ENCODE measurements at regions of chr2 and their contacts with region 1.

Region 1: GRCh38 chr2:3728104-3729054 is 25.0 kb downstream of the DCDC2C start:
- DNase-seq: peak in 1 of 9 experiments; percentile 10
- ATAC-seq: no peak
- H3K4me3 ChIP-seq: no peak overlapping the region
- H3K4me3 Mint-ChIP-seq: no peak overlapping the region
- H3K27ac ChIP-seq: no peak overlapping the region
- H3K27ac Mint-ChIP-seq: no peak overlapping the region
- H3K4me1 ChIP-seq: no peaks in the 10 kb centered on the region
- H3K4me1 Mint-ChIP-seq: no peaks in the 10 kb centered on the region
- H3K27me3 ChIP-seq: no peaks in the 10 kb centered on the region
- H3K27me3 Mint-ChIP-seq: peaks cover 6% of the 10 kb centered on the region
- CTCF ChIP-seq: peak; percentile 34

Region 2: DNA sequence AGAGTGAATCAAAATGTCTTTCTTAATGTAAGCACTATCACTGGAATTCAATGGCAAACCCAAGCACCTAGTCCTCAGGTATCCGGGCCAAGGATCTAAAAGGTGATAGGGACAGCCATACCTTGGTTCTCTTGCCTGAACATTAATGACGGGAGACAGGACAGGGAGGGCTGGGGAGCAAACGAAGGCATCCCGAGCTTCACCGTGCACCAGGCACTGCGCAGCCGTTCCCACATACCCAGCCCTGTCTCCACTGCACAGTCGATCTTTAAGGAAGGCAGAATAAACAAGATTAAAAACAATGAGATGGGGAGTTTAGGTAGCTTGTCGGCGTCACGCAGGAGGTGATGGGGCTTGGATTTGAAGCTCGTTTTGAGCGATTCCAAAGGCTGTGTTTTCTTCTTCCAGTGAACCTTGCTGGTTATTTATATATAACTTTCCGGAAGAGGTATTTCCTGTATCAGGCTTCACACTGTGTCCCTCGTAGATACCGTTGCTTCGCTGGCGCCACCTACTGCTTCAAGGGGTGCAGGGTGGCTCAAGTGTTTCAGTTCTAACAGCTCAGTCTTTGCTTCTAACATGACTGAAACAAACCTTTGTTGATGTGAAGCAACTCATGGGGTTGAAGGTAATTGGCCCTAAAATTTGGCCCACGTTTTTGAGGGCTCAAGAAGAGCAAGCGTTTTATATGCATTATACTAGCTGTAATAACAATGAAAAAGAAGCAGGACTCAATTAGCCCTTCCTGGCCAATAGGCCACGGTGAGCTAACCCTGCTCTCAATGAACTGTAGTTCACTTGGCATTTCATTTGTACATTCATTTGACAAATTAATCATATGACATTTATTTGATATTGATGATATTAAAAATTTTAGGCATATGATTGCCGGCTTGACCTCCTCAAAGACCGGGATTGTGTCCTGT is 52.4 kb after region 1 on chr2:
- CTCF ChIA-PET with region 1: interaction called, 6 read pairs
- POLR2A ChIA-PET with region 1: no interaction called
- intact Hi-C with region 1: loop called in 1 of 2 experiments (anchors 2 kb)
- DNase-seq: peak in 7 of 9 experiments; percentile 4 to 56 (median 36)
- ATAC-seq: no peak
- H3K4me3 ChIP-seq: no peak overlapping the region
- H3K4me3 Mint-ChIP-seq: peak overlapping the region; percentile 62
- H3K27ac ChIP-seq: no peak overlapping the region
- H3K27ac Mint-ChIP-seq: no peak overlapping the region
- H3K4me1 ChIP-seq: no peaks in the 10 kb centered on the region
- H3K4me1 Mint-ChIP-seq: peaks cover 8% of the 10 kb centered on the region
- H3K27me3 ChIP-seq: no peaks in the 10 kb centered on the region
- H3K27me3 Mint-ChIP-seq: peaks cover 15% of the 10 kb centered on the region
- CTCF ChIP-seq: peak; percentile 23